Activated CD4-positive, alpha-beta T cell treated with anti-CD3 and anti-CD28 coated beads for 36 hours (primary cell): ENCODE measurements at regions of chr19 and their contacts with region 1.

Region 1: GRCh38 chr19:58182989-58183816 is at the start of gene ZNF274:
- DNase-seq: peak; percentile 98
- ATAC-seq: peak; percentile 91
- H3K4me3 Mint-ChIP-seq: peak within 1 kb of the TSS; percentile 88
- H3K27ac Mint-ChIP-seq: peak within 1 kb of the TSS; percentile 99
- H3K4me1 Mint-ChIP-seq: peaks cover 16% of the 10 kb centered on the region
- H3K27me3 Mint-ChIP-seq: no peaks in the 10 kb centered on the region
- total RNA-seq, gene ZNF274: 20.2 to 20.5 TPM

Region 2: DNA sequence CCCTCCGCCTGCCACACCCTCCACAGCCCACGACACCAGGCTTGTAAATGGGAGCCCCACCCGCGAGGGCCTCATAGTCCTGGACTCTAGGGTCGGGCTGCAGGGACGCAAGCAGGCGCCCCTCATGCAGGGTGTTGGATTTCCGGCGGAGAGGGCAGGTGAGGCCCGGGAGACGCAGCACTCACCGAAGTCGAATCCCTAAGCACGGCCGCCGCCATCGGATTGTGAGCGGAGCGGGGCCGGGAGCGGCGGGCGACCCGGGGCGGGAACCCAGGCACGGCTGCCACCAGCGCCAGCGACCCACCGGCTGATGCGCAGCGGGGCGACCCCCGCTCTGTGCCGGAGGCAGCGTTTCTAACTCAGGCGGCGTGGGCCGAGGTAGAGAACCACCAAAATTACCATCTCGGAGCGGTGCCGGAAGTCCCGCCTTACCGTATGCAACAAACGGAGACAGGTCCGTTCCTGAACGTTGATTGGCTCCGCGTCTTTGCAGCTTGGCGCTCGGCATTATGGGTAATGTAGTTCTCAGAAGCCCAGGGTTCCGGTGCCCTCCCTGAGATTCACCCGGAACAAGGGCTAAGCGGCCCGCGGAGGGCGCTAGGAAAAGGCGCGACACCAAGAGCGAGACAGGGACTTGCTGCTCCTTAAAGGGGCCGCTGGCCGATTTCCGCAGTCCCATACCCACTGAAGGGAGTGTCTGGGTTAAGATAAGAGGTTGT is 604.6 kb before region 1 on chr19 and contains the start of gene ZNF416:
- CTCF ChIA-PET with region 1: no interaction called
- POLR2A ChIA-PET with region 1: no interaction called
- intact Hi-C with region 1: loop called in 1 of 2 experiments (anchors 5 kb)
- DNase-seq: peak; percentile 97
- ATAC-seq: peak; percentile 96
- H3K4me3 Mint-ChIP-seq: peak within 1 kb of the TSS; percentile 77
- H3K27ac Mint-ChIP-seq: peak within 1 kb of the TSS; percentile 77
- H3K4me1 Mint-ChIP-seq: peaks cover 23% of the 10 kb centered on the region
- H3K27me3 Mint-ChIP-seq: no peaks in the 10 kb centered on the region
- total RNA-seq, gene ZNF416: 3.3 to 3.7 TPM

Region 3: GRCh38 chr19:58002384-58003173 is 180.6 kb before region 1 on chr19 and contains the start of gene ZNF606:
- CTCF ChIA-PET with region 1: no interaction called
- POLR2A ChIA-PET with region 1: no interaction called
- intact Hi-C with region 1: loop called in 1 of 2 experiments (anchors 1 kb)
- DNase-seq: peak; percentile 93
- ATAC-seq: peak; percentile 99
- H3K4me3 Mint-ChIP-seq: peak within 1 kb of the TSS; percentile 80
- H3K27ac Mint-ChIP-seq: peak within 1 kb of the TSS; percentile 86
- H3K4me1 Mint-ChIP-seq: peaks cover 29% of the 10 kb centered on the region
- H3K27me3 Mint-ChIP-seq: no peaks in the 10 kb centered on the region
- total RNA-seq, gene ZNF606: 6.0 to 8.9 TPM

Region 4: DNA sequence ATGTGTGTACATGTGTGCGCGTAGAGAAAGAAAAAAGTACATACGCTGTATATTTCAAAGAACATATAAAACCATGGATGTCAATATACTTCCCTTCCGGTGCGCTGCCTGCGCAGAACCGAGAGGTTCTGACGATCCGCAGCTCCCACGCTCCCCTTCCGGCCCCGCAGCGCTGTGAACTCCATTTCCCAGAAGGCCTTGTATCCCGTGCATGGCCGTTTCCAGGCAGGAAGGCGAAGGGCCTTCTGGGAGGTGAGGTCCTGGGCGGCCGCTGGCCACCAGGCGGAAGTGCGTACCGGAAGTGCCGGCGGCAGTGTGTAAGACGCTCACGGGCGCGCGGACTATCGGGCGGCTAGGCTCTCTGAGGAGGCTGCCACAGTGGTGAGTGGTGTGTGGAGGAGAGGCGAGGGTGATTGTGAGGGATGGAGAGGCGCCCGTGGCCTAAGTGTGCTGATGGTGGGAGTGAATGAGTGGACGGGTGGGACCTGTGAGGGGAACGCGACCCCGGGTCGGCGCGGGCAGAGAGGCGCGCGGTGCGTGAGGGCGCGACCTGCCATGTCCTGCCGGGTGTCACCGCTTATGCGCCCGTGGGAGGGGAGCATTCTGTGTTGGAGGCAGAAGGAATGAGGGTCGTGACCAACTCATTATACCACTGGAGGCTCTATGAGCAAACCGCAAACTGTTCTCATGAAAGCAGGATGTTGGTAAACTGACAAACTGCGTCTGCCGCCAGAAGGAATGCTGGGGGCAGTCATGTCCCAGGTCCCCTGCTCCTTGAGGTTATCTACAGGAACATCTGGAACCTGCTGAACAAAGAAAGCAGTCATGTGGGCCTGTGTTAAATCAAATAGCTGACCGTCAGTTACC is 122.1 kb after region 1 on chr19 and contains the start of gene ERVK3-1:
- CTCF ChIA-PET with region 1: no interaction called
- POLR2A ChIA-PET with region 1: no interaction called
- intact Hi-C with region 1: loop called (anchors 1 kb)
- DNase-seq: peak; percentile 97
- ATAC-seq: peak; percentile 98
- H3K4me3 Mint-ChIP-seq: peak within 1 kb of the TSS; percentile 99
- H3K27ac Mint-ChIP-seq: peak within 1 kb of the TSS; percentile 100
- H3K4me1 Mint-ChIP-seq: peaks cover 52% of the 10 kb centered on the region
- H3K27me3 Mint-ChIP-seq: no peaks in the 10 kb centered on the region
- total RNA-seq, gene ERVK3-1: 38.6 to 53.6 TPM

Region 5: DNA sequence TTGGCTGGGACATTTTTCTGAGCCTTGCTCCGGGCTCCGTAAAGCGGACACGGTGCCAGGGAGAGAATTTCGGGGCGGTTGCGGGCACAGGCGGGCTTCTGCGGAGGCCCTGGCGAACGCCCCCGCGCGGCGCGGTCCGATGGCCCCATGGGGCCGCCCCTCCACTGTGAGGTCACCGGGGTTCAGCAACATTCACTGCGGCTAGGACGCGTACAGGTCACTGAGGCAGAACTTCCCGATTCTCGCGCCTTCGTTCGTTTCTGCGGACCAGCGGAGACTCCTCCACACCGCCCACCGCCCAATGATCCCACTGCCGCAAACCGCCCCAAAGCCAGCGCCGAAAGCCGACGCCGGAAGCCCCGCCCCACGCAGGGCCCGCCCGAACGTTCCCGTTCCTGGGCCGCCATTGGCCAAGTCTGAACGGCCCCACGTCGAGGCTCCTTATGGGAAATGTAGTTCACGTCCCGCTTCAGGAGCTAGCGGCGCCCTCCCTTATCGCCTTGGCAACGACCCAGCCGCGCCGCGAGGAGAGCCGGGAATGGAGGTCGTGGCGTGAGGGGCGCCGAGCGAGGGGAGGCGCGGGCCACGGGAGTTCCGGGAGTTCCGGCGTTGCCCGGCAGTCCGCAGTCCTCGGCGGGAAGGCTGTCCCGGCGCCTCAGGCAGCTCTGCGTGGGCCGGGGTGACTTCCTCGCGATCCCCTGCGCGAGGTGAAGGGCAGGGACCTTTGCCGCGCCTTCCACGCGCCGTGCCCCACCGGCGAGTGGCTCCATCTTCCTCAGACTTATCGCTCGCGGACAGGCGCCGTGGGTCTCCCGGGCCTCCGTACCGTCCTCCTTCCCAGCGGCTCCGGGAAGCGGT is 225.2 kb after region 1 on chr19 and contains the start of gene ZNF584:
- CTCF ChIA-PET with region 1: no interaction called
- POLR2A ChIA-PET with region 1: no interaction called
- intact Hi-C with region 1: loop called (anchors 1 to 10 kb)
- DNase-seq: peak; percentile 97
- ATAC-seq: peak; percentile 97
- H3K4me3 Mint-ChIP-seq: peak within 1 kb of the TSS; percentile 84
- H3K27ac Mint-ChIP-seq: peak within 1 kb of the TSS; percentile 92
- H3K4me1 Mint-ChIP-seq: peaks cover 29% of the 10 kb centered on the region
- H3K27me3 Mint-ChIP-seq: no peaks in the 10 kb centered on the region
- total RNA-seq, gene ZNF584: 9.9 to 11.2 TPM

Region 6: DNA sequence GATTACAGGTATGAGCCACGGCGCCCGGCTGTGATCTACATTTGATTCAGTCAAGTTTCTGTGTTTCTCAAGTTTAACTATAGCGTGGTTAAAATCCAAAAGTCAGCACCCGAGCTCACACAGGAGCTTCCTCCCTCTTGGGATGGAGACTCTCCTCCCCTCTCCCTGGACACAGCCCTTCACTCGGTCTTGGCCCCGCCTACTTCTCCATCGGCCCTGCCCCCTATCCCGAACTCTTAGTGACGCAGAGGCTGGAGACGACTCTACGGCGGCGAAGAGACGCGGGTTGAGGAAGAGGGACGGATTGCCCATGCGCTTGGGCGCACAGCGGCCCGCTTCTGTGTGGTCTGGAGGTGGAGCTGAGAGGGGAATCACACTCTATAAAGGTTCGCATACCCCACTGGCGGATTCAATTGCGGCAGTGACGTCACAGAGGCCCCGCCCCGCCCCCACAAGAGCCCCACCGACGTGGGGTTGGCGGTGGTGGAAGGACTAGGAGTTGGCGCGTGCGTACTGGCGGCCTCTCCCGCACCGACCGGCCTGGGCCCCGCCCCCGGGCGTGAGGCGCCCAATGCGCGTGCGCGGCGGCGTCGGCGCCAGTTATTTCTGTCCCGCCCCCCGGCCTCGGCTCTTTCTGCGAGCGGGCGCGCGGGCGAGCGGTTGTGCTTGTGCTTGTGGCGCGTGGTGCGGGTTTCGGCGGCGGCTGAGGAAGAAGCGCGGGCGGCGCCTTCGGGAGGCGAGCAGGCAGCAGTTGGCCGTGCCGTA is 360.8 kb after region 1 on chr19 and contains the start of gene TRIM28:
- CTCF ChIA-PET with region 1: no interaction called
- POLR2A ChIA-PET with region 1: no interaction called
- intact Hi-C with region 1: loop called in 1 of 2 experiments (anchors 1 kb)
- DNase-seq: peak; percentile 100
- ATAC-seq: peak; percentile 98
- H3K4me3 Mint-ChIP-seq: peak within 1 kb of the TSS; percentile 96
- H3K27ac Mint-ChIP-seq: peak within 1 kb of the TSS; percentile 97
- H3K4me1 Mint-ChIP-seq: peaks cover 34% of the 10 kb centered on the region
- H3K27me3 Mint-ChIP-seq: peaks cover 4% of the 10 kb centered on the region
- total RNA-seq, gene TRIM28: 481 to 758 TPM